ENCODE measurements at regions of chr15 and their contacts with region 1.

Region 1: DNA sequence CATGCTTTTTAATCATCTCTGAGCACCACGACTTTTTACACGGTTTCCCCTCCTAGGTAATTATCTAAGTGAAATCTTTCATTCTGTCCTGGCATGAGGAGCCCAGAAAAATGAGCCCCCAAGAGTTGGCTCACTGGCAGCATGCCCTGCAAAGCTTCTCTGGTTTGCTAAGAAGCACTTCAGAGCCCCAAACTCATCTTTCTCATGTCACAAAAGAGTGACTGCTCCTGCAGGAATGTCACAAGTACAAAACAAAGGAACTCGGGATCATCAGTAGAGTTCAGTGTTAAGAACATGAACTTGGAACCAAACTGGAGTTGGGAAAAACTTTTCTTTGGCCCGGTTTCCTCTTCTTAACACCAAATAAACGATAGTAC is 123.9 kb downstream of the FOXB1 start:
- DNase-seq: no peak
- ATAC-seq: no peak
- H3K4me3 ChIP-seq: peak overlapping the region; percentile 75
- H3K4me3 Mint-ChIP-seq: peak overlapping the region; percentile 81 to 94 (median 90)
- H3K27ac ChIP-seq: peak overlapping the region; percentile 72
- H3K27ac Mint-ChIP-seq: peak overlapping the region; percentile 83 to 100 (median 96)
- H3K4me1 ChIP-seq: peaks cover 12 to 21% of the 10 kb centered on the region in 2 donors
- H3K4me1 Mint-ChIP-seq: peaks cover 10 to 57% (median 44%) of the 10 kb centered on the region in 7 donors
- H3K27me3 ChIP-seq: no peaks in the 10 kb centered on the region
- H3K27me3 Mint-ChIP-seq: peaks cover 0 to 12% (median 0%) of the 10 kb centered on the region in 5 donors

Region 2: GRCh38 chr15:59751552-59752413 is 376.2 kb before region 1 on chr15:
- CTCF ChIA-PET with region 1: interaction called, 4 read pairs
- POLR2A ChIA-PET with region 1: no interaction called
- intact Hi-C with region 1: loop called in 1 of 2 experiments (anchors 1 kb)
- DNase-seq: peak in 7 of 9 donors; percentile 47 to 77 (median 65)
- ATAC-seq: peak; percentile 96
- H3K4me3 ChIP-seq: no peak overlapping the region
- H3K4me3 Mint-ChIP-seq: no peak overlapping the region
- H3K27ac ChIP-seq: no peak overlapping the region
- H3K27ac Mint-ChIP-seq: peak overlapping the region in 6 of 9 donors; percentile 0 to 26 (median 6)
- H3K4me1 ChIP-seq: peaks cover 0 to 9% of the 10 kb centered on the region in 2 donors
- H3K4me1 Mint-ChIP-seq: peaks cover 4 to 18% (median 17%) of the 10 kb centered on the region in 7 donors
- H3K27me3 ChIP-seq: no peaks in the 10 kb centered on the region
- H3K27me3 Mint-ChIP-seq: peaks cover 0 to 23% (median 4%) of the 10 kb centered on the region in 5 donors

Region 3: GRCh38 chr15:59917504-59918157 is 210.4 kb before region 1 on chr15:
- CTCF ChIA-PET with region 1: interaction called, 31 read pairs
- POLR2A ChIA-PET with region 1: no interaction called
- intact Hi-C with region 1: loop called (anchors 1 to 5 kb)
- DNase-seq: peak; percentile 31 to 67 (median 54)
- ATAC-seq: peak; percentile 90
- H3K4me3 ChIP-seq: no peak overlapping the region
- H3K4me3 Mint-ChIP-seq: peak overlapping the region in 1 of 10 donors; percentile 33
- H3K27ac ChIP-seq: no peak overlapping the region
- H3K27ac Mint-ChIP-seq: peak overlapping the region in 4 of 9 donors; percentile 31 to 51 (median 37)
- H3K4me1 ChIP-seq: peaks cover 0 to 11% of the 10 kb centered on the region in 2 donors
- H3K4me1 Mint-ChIP-seq: peaks cover 6 to 29% (median 25%) of the 10 kb centered on the region in 7 donors
- H3K27me3 ChIP-seq: peaks cover 0 to 5% of the 10 kb centered on the region in 2 donors
- H3K27me3 Mint-ChIP-seq: peaks cover 0 to 30% (median 8%) of the 10 kb centered on the region in 5 donors

Region 4: DNA sequence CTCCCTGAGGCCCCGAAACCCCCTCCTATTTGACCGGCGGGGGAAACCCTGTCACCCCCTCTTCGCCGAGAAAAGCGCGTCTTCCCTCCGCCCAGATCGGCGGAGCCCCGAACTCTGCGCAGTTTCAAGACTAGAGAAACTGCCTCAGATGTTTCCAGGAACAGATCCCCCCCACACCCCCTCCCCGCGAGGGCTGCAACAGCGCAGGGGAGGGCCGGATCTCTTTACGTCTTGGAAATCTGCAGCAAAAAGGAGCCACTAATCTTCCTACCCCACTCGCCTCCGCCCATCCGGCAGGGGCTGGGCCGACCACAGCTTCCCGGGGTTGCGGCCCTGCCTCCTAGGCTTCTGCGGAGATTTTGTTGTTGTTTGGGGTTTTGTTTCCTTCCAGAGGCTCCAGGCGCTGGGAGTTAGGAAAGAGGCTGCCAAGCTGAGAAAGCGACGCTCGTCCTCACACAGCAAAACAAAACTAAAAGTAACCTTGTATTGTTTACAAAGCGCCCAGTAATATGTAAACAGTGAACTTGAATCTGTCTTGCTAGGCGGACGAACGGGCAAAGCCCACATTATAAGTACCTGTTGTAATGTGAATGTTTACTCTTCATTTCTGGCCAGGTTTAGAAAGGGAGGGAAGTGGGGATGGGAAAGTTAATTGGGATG is 121.7 kb before region 1 on chr15:
- CTCF ChIA-PET with region 1: no interaction called
- POLR2A ChIA-PET with region 1: no interaction called
- intact Hi-C with region 1: loop called (anchors 1 kb)
- DNase-seq: peak; percentile 37 to 81 (median 69)
- ATAC-seq: peak; percentile 82
- H3K4me3 ChIP-seq: peak overlapping the region; percentile 49
- H3K4me3 Mint-ChIP-seq: peak overlapping the region; percentile 80 to 97 (median 90)
- H3K27ac ChIP-seq: no peak overlapping the region
- H3K27ac Mint-ChIP-seq: peak overlapping the region; percentile 52 to 97 (median 86)
- H3K4me1 ChIP-seq: peaks cover 23 to 27% of the 10 kb centered on the region in 2 donors
- H3K4me1 Mint-ChIP-seq: peaks cover 26 to 52% (median 40%) of the 10 kb centered on the region in 7 donors
- H3K27me3 ChIP-seq: peaks cover 30 to 76% of the 10 kb centered on the region in 2 donors
- H3K27me3 Mint-ChIP-seq: peaks cover 74 to 94% (median 89%) of the 10 kb centered on the region in 5 donors

Region 5: DNA sequence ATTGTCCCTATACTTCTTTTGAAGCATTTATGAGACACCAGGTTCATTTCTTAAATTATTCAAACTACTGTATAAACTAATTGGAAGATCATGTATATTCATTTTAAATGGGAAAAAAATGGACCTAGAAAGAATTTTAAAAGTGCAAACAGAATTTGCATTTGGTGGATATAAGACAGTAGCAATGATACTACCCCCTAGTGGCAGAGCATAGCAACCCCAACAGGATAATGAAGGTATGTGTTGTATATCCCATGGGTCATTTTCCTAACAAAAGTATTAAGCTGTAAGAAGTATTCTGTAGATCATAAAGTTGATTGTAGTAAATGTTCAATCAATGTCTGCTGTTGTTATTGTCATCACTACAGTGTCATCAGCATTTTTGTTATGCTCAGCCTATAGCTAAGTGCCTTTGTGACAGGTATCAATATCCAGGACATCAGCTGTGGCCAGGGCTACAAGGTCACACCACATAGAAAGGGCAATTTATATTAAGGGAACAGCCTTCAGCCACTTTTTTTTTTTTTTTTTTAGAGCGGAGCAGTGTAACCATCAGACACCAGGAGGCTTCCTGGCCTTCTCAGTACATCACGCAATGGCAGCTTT is 51.9 kb after region 1 on chr15:
- CTCF ChIA-PET with region 1: no interaction called
- POLR2A ChIA-PET with region 1: no interaction called
- intact Hi-C with region 1: loop called in 1 of 2 experiments (anchors 1 kb)
- DNase-seq: peak in 7 of 9 donors; percentile 19 to 52 (median 41)
- ATAC-seq: peak; percentile 73
- H3K4me3 ChIP-seq: no peak overlapping the region
- H3K4me3 Mint-ChIP-seq: no peak overlapping the region
- H3K27ac ChIP-seq: no peak overlapping the region
- H3K27ac Mint-ChIP-seq: no peak overlapping the region
- H3K4me1 ChIP-seq: no peaks in the 10 kb centered on the region
- H3K4me1 Mint-ChIP-seq: no peaks in the 10 kb centered on the region
- H3K27me3 ChIP-seq: no peaks in the 10 kb centered on the region
- H3K27me3 Mint-ChIP-seq: peaks cover 2 to 49% (median 9%) of the 10 kb centered on the region in 5 donors

Region 6: GRCh38 chr15:60223176-60223575 is 95.2 kb after region 1 on chr15:
- CTCF ChIA-PET with region 1: no interaction called
- POLR2A ChIA-PET with region 1: no interaction called
- intact Hi-C with region 1: no loop called
- DNase-seq: no peak
- ATAC-seq: no peak
- H3K4me3 ChIP-seq: no peak overlapping the region
- H3K4me3 Mint-ChIP-seq: no peak overlapping the region
- H3K27ac ChIP-seq: no peak overlapping the region
- H3K27ac Mint-ChIP-seq: no peak overlapping the region
- H3K4me1 ChIP-seq: no peaks in the 10 kb centered on the region
- H3K4me1 Mint-ChIP-seq: no peaks in the 10 kb centered on the region
- H3K27me3 ChIP-seq: no peaks in the 10 kb centered on the region
- H3K27me3 Mint-ChIP-seq: peaks cover 0 to 52% (median 0%) of the 10 kb centered on the region in 5 donors

Measured in naive thymus-derived CD4-positive, alpha-beta T cell (primary cell).